ENCODE measurements at regions of chrX and their contacts with region 1.

Region 1: GRCh38 chrX:53317365-53318069 is 36.1 kb upstream of the IQSEC2 start:
- DNase-seq: peak; percentile 71
- ATAC-seq: peak; percentile 84
- H3K4me3 Mint-ChIP-seq: no peak overlapping the region
- H3K27ac Mint-ChIP-seq: no peak overlapping the region
- H3K4me1 Mint-ChIP-seq: peaks cover 13% of the 10 kb centered on the region
- H3K27me3 Mint-ChIP-seq: peaks cover 31% of the 10 kb centered on the region

Region 2: GRCh38 chrX:53171356-53171755 is 146.2 kb before region 1 on chrX:
- CTCF ChIA-PET with region 1: no interaction called
- POLR2A ChIA-PET with region 1: no interaction called
- DNase-seq: no peak
- ATAC-seq: no peak
- H3K4me3 Mint-ChIP-seq: no peak overlapping the region
- H3K27ac Mint-ChIP-seq: no peak overlapping the region
- H3K4me1 Mint-ChIP-seq: no peaks in the 10 kb centered on the region
- H3K27me3 Mint-ChIP-seq: no peaks in the 10 kb centered on the region

Region 3: DNA sequence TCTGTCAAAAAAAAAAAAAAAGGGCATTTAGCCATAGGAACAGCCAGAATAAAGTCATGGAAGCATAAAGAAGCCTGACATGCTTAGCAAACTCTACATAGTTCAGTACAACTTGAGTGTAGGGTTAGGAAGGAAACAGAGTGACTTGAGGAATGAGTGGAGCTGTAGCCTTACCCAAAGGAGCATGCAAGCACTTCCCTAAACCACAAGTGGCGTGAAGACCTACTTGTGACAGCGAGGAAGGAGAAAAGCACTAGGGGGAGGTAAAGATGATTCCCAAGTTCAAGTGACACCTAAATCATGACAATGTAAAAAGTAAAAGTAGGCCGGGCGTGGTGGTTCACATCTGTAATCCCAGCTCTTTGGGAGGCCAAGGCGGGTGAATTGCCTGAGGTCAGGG is 14.3 kb before region 1 on chrX:
- CTCF ChIA-PET with region 1: interaction called, 13 read pairs
- POLR2A ChIA-PET with region 1: no interaction called
- DNase-seq: no peak
- ATAC-seq: no peak
- H3K4me3 Mint-ChIP-seq: no peak overlapping the region
- H3K27ac Mint-ChIP-seq: no peak overlapping the region
- H3K4me1 Mint-ChIP-seq: no peaks in the 10 kb centered on the region
- H3K27me3 Mint-ChIP-seq: no peaks in the 10 kb centered on the region

Region 4: DNA sequence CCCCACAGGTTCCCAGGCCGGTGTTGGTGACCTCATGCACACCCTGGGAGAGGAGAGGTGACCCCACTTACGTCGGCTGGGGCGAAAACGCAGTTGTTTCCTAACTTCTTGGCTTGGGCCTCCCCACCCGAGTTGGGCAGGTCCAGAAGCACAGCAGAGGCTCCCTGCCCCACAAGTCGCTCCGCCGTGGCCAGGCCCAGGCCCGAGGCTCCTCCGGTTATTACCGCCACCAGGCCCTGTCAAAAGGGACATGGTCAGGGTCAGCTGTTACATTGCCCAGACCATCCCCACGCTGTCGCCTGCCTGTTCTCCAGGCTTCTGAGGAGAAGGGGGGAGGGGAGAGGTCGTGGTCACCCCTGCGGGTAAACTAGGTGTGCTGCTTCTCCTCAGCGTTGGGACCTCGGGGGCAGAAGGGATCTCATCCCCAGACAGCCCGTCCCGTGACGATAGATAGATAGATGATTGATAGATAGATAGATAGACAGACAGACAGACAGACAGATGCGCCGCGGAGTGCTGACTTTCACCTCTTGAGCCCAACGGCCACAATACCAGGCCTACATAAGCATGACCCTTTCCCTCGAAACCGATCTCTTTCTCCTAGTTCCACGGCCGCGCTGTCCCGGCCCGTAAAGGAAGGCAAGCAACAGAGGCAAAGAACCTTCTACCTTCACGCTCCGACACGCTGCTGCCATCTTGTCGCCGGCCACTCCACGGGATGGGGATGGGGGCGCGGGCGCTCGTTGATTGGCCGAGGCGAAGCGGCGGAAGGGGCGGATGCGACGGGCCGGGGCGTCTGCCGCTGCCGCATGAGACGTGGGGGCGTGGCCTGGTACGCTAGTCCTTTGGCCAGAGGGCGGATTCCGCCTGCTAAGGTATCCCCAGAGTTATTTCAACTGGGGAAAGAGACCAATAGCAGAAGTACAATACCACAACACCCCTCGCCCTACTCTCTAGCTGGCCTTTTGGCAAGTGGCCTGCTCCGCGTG is 116.4 kb after region 1 on chrX and contains the start of gene HSD17B10:
- CTCF ChIA-PET with region 1: interaction called, 37 read pairs
- POLR2A ChIA-PET with region 1: no interaction called
- DNase-seq: peak; percentile 91
- ATAC-seq: peak; percentile 97
- H3K4me3 Mint-ChIP-seq: peak within 1 kb of the TSS; percentile 96
- H3K27ac Mint-ChIP-seq: peak within 1 kb of the TSS; percentile 92
- H3K4me1 Mint-ChIP-seq: peaks cover 38% of the 10 kb centered on the region
- H3K27me3 Mint-ChIP-seq: no peaks in the 10 kb centered on the region
- total RNA-seq, gene HSD17B10: 106 to 113 TPM

Region 5: GRCh38 chrX:53445977-53446376 is 128.5 kb after region 1 on chrX:
- CTCF ChIA-PET with region 1: interaction called, 58 read pairs
- POLR2A ChIA-PET with region 1: no interaction called
- DNase-seq: peak; percentile 64
- ATAC-seq: no peak
- H3K4me3 Mint-ChIP-seq: no peak overlapping the region
- H3K27ac Mint-ChIP-seq: no peak overlapping the region
- H3K4me1 Mint-ChIP-seq: peaks cover 11% of the 10 kb centered on the region
- H3K27me3 Mint-ChIP-seq: no peaks in the 10 kb centered on the region

Region 6: DNA sequence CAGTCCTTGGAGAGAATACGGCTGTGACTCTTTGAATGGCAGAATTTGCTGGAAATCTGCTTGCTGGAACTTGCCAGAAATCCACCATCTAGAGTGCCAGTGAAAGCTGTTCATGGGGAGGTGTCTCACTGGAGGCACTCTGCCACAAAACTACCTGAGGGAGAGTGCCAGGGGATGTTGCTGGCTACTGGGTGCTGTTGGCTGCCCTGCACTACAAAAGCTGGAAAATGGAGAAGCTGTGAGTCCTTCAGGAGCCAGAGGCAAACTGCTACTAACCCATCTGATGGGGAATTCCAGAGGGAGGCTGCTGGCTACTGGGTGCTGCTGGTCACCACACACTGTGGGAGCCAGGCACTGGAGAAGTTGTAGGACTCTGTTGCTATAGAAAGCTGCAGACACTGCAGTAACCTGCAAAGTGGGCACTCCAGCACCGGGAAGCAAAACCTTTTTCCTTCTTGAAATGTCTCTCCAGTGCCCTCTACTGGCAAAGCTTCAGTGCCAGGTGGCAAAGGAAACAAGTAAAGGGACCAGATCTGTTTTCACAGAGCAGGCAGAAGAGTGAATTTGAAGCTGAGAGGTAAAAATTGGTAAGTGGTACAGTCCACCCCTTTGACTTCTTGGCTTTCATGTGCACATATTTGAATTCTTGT is 164.4 kb after region 1 on chrX:
- CTCF ChIA-PET with region 1: interaction called, 48 read pairs
- POLR2A ChIA-PET with region 1: no interaction called
- DNase-seq: peak; percentile 67
- ATAC-seq: peak; percentile 53
- H3K4me3 Mint-ChIP-seq: no peak overlapping the region
- H3K27ac Mint-ChIP-seq: no peak overlapping the region
- H3K4me1 Mint-ChIP-seq: peaks cover 2% of the 10 kb centered on the region
- H3K27me3 Mint-ChIP-seq: no peaks in the 10 kb centered on the region

Measured in activated CD8-positive, alpha-beta T cell treated with anti-CD3 and anti-CD28 coated beads, Interleukin-2, amount 10 ng/mL, durations not matched to agents 7 days and 5 days (primary cell).